Activated CD4-positive, alpha-beta memory T cell treated with anti-CD3 and anti-CD28 coated beads for 36 hours (primary cell): ENCODE measurements at regions of chr11 and their contacts with region 1.

Region 1: GRCh38 chr11:46346886-46347636 is at the start of gene DGKZ:
- DNase-seq: peak; percentile 92
- H3K4me3 Mint-ChIP-seq: peak within 1 kb of the TSS; percentile 86
- H3K27ac Mint-ChIP-seq: peak within 1 kb of the TSS; percentile 90
- H3K4me1 Mint-ChIP-seq: peaks cover 80% of the 10 kb centered on the region
- H3K27me3 Mint-ChIP-seq: no peaks in the 10 kb centered on the region
- total RNA-seq, gene DGKZ: 85.3 to 88.7 TPM

Region 2: GRCh38 chr11:46121724-46122477 is 225.2 kb before region 1 on chr11:
- CTCF ChIA-PET with region 1: no interaction called
- POLR2A ChIA-PET with region 1: no interaction called
- intact Hi-C with region 1: loop called (anchors 2 kb)
- DNase-seq: peak; percentile 82
- H3K4me3 Mint-ChIP-seq: peak overlapping the region; percentile 77
- H3K27ac Mint-ChIP-seq: peak overlapping the region; percentile 85
- H3K4me1 Mint-ChIP-seq: peaks cover 39% of the 10 kb centered on the region
- H3K27me3 Mint-ChIP-seq: no peaks in the 10 kb centered on the region

Region 3: DNA sequence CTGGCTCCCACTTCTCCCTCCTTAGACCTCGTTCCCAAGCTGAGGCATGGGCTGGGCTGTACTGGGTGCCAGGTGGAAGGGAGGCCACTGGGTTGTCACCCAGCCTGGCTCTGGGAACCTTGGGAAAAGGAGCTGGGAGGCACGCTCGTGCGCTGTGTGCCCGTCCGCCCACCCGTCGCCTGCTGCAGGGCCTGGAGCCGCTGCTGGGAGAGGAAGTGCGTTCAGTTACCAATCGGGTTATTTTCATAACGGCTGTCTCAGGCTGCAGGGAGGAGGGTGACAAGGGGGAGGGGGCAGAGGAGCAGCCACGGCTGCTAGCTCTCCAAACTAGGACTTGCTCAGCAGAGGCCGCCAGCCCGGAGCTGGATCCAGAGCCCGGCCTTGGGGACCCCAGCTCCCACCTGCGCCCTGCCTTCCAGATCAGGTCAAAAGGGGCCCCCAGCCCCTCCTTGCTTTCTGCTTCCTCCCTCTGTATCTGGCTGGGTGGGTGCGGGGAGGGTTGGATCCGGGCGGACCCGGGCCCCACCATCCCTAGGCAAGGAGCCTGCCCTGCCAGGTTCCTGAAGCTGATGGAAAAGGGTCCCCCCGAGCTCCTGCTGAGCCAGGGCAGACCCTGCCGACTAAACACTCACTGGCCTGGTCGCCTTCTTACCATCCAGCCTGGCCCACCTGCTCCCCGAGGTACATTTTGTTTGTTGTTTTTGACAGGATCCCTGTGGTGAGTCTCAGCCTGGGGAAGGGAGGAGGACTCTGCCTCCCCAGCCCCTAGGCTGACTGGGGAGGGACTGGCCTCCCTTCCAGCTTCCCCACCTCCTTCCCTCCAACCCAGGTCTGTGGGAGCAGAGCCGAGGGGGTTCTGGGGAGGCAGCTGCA is 14.5 kb after region 1 on chr11:
- CTCF ChIA-PET with region 1: interaction called, 346 read pairs
- POLR2A ChIA-PET with region 1: interaction called, 15 read pairs
- intact Hi-C with region 1: no loop called
- DNase-seq: peak; percentile 84
- H3K4me3 Mint-ChIP-seq: peak overlapping the region; percentile 72
- H3K27ac Mint-ChIP-seq: peak overlapping the region; percentile 84
- H3K4me1 Mint-ChIP-seq: peaks cover 62% of the 10 kb centered on the region
- H3K27me3 Mint-ChIP-seq: no peaks in the 10 kb centered on the region

Region 4: DNA sequence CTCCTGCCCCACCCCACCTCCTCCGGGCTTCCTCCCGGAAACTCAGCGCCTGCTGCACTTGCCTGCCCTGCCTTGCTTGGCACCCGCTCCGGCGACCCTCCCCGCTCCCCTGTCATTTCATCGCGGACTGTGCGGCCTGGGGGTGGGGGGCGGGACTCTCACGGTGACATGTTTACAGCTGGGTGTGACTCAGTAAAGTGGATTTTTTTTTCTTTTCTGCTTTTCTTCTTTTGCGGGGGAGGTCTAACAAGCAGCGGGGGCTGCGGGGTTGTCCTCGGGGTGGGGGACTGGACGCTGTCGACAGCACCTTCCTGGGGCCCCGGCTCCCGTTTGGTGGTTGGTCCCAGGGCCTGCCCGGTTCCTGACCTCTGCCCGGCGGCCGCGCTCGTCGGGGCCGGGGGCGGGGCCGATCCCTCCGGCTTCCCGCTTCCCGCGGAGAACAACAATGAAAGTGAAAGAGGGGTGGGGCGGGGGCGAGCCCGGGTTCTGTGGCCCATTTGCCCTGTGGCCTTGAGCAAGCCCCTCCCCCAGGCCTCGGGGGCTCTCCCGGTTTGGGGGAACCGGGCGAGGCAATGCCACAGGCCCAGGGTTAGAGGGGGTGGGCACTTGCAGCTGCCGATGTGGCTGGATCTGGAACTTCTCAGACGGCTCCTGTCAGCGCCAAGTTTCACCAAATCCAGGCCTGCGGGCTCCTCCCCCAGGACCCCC is 33.4 kb after region 1 on chr11:
- CTCF ChIA-PET with region 1: interaction called, 17 read pairs
- POLR2A ChIA-PET with region 1: interaction called, 3 read pairs
- intact Hi-C with region 1: loop called (anchors 1 kb)
- DNase-seq: peak; percentile 88
- H3K4me3 Mint-ChIP-seq: peak overlapping the region; percentile 74
- H3K27ac Mint-ChIP-seq: peak overlapping the region; percentile 45
- H3K4me1 Mint-ChIP-seq: peaks cover 7% of the 10 kb centered on the region
- H3K27me3 Mint-ChIP-seq: peaks cover 17% of the 10 kb centered on the region

Region 5: DNA sequence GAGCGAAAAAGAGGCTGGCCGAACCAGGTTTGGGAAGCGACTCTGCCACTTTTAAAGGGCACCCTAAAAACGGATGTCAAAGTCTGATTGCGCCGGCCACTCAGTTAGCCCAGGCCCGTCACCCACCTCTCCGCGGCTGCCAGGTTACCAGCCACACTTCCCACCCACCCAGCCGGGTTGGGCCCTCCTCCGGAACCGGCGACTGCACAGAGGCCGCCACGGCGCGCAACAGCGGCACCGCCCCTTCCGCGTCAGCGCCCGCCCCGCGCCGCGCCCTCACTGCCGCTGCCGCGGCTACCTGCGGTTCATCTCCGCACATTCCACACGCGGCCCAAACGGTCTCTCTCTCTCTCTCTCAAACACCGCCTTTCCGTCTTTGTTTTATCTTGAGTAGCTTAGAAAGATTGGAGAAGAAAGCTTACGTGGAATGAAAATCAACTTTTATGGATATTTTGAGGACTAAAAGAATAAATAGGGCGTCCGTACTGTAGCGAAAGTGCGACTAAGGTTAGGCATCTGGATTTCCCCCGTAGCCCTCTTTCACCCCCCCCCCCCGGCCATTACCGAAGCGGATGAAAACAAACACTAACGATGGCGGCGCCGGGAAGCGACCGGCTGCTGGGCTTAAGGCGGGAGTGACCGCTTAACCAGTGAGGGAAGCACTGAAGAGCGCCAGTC is 270.1 kb after region 1 on chr11 and contains the starts of genes ATG13 and HARBI1:
- CTCF ChIA-PET with region 1: interaction called, 3 read pairs
- POLR2A ChIA-PET with region 1: interaction called, 4 read pairs
- intact Hi-C with region 1: loop called (anchors 2 kb)
- DNase-seq: peak; percentile 95
- H3K4me3 Mint-ChIP-seq: peak within 1 kb of the TSS; percentile 93
- H3K27ac Mint-ChIP-seq: peak within 1 kb of the TSS; percentile 98
- H3K4me1 Mint-ChIP-seq: peaks cover 39% of the 10 kb centered on the region
- H3K27me3 Mint-ChIP-seq: no peaks in the 10 kb centered on the region
- total RNA-seq, gene ATG13: 49.9 to 51.0 TPM
- total RNA-seq, gene HARBI1: 3.1 TPM

Region 6: DNA sequence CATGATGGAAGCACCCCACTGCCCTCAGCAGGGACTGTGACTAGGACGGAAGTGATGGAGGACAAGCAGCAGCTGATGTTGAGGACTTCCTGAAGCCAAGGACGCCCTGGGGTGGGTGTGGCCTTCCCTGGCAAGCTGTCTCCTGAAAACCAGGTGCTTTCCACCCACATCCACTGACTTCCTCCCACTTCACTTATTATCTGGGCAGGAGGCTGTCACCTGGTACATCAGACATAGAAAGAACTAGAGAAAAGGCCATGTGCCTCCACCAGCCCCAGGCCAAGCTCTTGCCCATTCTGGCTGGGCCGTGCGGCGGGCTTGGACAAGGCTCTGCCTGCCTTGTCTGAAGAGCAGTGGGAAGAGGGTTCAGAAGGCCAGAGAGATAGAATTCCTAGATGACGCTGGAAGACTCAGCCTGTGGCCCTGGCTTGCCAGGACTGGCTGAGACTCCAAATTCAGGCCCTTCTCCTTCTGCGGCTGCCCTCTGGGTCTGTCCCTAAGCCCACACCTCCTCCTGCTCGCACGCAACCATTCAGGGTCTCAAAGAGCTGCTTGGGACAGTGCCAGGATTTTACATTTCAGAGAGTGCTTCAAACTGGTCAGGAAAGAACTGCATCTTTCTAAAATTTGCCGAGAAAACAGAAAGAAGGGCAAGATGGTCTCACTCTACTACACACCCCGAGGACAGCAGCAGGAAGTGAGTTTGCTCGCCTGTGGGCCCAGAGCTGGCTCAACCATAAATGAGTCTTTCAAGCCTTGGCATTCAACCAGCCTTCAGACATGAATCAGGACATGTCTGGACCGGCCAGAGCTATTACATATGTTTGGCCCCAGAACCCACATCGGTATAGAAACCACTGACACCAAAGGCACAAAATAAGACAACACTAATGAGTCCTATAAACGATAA is 340.1 kb after region 1 on chr11:
- CTCF ChIA-PET with region 1: no interaction called
- POLR2A ChIA-PET with region 1: no interaction called
- intact Hi-C with region 1: no loop called
- DNase-seq: no peak
- H3K4me3 Mint-ChIP-seq: no peak overlapping the region
- H3K27ac Mint-ChIP-seq: no peak overlapping the region
- H3K4me1 Mint-ChIP-seq: no peaks in the 10 kb centered on the region
- H3K27me3 Mint-ChIP-seq: no peaks in the 10 kb centered on the region